ENCODE measurements at regions of chr17 and their contacts with region 1.

Region 1: DNA sequence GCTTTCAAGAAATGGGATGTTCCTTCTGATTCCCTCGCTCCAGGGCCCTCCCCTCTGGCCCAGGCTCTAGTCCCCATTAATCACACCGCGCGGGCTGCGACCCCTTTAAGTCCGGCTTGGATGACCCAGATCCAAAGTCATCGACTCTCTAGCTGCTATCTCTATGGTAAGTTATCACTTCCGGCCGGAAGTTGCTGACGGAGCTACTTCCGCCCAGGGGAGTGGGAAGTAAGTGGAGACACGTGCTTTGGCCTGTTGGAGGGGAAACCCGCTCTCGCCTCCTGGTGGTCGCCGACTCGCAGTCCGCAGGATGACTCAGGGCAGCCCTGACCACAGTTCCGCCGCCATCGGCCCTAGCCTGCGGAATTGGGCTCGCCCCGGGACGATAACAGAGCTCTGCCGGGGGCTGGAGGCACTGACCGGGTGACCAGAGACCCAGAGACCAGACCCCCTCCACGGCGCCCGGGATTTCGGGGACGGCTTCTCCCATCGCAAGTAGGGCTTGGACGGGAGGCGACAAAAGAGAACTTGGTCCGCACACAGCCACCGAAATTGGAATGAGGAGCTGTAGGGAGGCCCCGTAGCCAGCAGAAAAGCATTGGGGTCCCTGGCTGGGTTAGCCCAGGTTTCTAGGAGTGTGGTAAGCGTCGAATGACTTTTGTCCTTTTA is 52.2 kb upstream of the SEC14L1 start:
- DNase-seq: peak; percentile 92
- H3K4me3 ChIP-seq: peak overlapping the region; percentile 58 to 94 (median 80)
- H3K27ac ChIP-seq: peak overlapping the region; percentile 84 to 91 (median 90)
- H3K4me1 ChIP-seq: peaks cover 7 to 33% (median 19%) of the 10 kb centered on the region in 4 donors
- H3K27me3 ChIP-seq: peaks cover 3% of the 10 kb centered on the region
- CTCF ChIP-seq: peak; percentile 49 to 76 (median 63)
- EP300 ChIP-seq: no peak
- POLR2A ChIP-seq: peak; percentile 74

Region 2: DNA sequence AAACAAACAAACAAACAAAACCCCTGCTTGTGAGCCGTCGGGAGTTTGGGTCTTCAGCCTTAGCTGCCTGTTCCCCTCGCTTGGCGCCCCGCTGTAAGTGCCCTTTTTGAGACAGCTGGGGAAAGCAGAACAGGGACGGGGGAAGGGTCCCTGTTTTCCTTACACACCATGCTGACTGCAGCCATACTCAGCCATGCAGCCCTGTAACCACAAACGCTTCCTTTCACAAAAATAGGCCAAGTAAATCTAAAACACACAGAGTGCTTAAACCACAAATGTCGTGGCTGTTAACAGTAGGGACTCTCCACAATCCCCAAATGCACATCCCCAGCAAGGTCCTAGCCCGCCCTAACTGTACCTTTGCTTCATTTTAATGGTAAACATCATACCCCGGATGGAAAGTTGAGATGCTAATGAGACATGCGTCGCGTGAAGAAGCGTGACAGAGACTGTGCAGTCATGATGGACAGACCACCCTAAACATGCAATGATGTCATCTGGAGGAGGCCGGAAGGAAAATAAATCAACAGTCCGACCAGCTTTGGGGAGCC is 90.5 kb before region 1 on chr17:
- in situ Hi-C with region 1: no loop called
- intact Hi-C with region 1: no loop called
- DNase-seq: peak; percentile 11
- H3K4me3 ChIP-seq: no peak overlapping the region
- H3K27ac ChIP-seq: no peak overlapping the region
- H3K4me1 ChIP-seq: no peaks in the 10 kb centered on the region
- H3K27me3 ChIP-seq: peaks cover 32% of the 10 kb centered on the region
- CTCF ChIP-seq: no peak
- EP300 ChIP-seq: no peak
- POLR2A ChIP-seq: no peak

Region 3: DNA sequence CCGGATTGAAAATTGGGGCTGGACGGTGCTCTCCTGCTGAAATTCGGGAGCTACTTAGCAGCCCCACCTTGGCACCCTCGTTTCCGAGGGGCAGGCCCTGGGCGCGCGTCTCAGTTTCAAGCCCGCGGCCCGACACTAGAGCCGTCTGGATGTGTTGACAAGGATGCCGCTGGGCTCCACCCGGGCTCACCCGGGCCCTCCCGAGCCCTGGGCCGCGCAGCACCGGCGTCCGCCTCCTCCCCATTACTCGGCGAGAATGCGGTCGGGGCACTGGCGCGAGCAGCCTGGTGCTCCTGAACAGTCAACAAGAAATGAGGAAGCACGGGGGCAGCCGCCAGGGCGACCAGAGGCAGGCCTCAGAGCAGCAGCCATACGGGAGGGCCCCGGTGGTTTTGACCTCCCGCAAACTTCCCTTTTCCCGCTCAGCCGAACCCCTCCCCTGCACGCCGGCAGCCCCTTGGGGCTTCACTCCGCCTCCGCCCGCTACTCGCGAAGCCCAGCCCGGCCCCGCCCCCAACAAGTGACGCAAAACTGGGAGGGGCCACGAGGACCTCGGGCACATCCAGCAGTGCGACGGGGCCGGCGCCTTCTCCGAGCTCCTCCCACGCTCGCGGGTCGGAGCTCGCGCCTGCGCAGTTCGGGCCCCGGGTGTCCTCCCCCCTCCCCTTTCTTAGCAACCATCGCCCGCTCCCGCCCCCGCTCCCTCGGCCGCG is 51.7 kb after region 1 on chr17:
- in situ Hi-C with region 1: no loop called
- intact Hi-C with region 1: loop called (anchors 5 kb)
- DNase-seq: peak; percentile 100
- H3K4me3 ChIP-seq: peak overlapping the region; percentile 75 to 99 (median 90)
- H3K27ac ChIP-seq: peak overlapping the region; percentile 94 to 99 (median 95)
- H3K4me1 ChIP-seq: peaks cover 2 to 32% (median 8%) of the 10 kb centered on the region in 4 donors
- H3K27me3 ChIP-seq: no peaks in the 10 kb centered on the region
- CTCF ChIP-seq: peak in 1 of 5 experiments; percentile 50
- EP300 ChIP-seq: no peak
- POLR2A ChIP-seq: peak; percentile 96

Region 4: GRCh38 chr17:77247048-77247541 is 158.5 kb after region 1 on chr17:
- in situ Hi-C with region 1: loop called (anchors 5 to 10 kb)
- intact Hi-C with region 1: loop called (anchors 2 kb)
- DNase-seq: peak; percentile 88
- H3K4me3 ChIP-seq: peak overlapping the region; percentile 37 to 54 (median 46)
- H3K27ac ChIP-seq: peak overlapping the region in 2 of 4 donors; percentile 42 to 60
- H3K4me1 ChIP-seq: peaks cover 6 to 11% (median 10%) of the 10 kb centered on the region in 4 donors
- H3K27me3 ChIP-seq: peaks cover 30% of the 10 kb centered on the region
- CTCF ChIP-seq: peak; percentile 95 to 99 (median 99)
- EP300 ChIP-seq: no peak
- POLR2A ChIP-seq: no peak

Region 5: GRCh38 chr17:77254951-77255825 is 166.6 kb after region 1 on chr17:
- in situ Hi-C with region 1: loop called in 2 of 4 experiments (anchors 5 to 10 kb)
- intact Hi-C with region 1: no loop called
- DNase-seq: no peak
- H3K4me3 ChIP-seq: no peak overlapping the region
- H3K27ac ChIP-seq: no peak overlapping the region
- H3K4me1 ChIP-seq: peaks cover 0 to 7% (median 0%) of the 10 kb centered on the region in 4 donors
- H3K27me3 ChIP-seq: peaks cover 13% of the 10 kb centered on the region
- CTCF ChIP-seq: no peak
- EP300 ChIP-seq: no peak
- POLR2A ChIP-seq: no peak

Region 6: GRCh38 chr17:77717941-77718668 is 629.5 kb after region 1 on chr17:
- in situ Hi-C with region 1: no loop called
- intact Hi-C with region 1: no loop called
- DNase-seq: no peak
- H3K4me3 ChIP-seq: no peak overlapping the region
- H3K27ac ChIP-seq: no peak overlapping the region
- H3K4me1 ChIP-seq: no peaks in the 10 kb centered on the region
- H3K27me3 ChIP-seq: peaks cover 12% of the 10 kb centered on the region
- CTCF ChIP-seq: no peak
- EP300 ChIP-seq: no peak
- POLR2A ChIP-seq: no peak

Measured in transverse colon (tissue), 4 donors.